ENCODE measurements at regions of chr3 and their contacts with region 1.

Region 1: GRCh38 chr3:101573449-101574387 is at the start of gene PCNP:
- DNase-seq: peak; percentile 98
- ATAC-seq: peak; percentile 78
- H3K4me3 Mint-ChIP-seq: peak within 1 kb of the TSS; percentile 98
- H3K27ac Mint-ChIP-seq: peak within 1 kb of the TSS; percentile 99
- H3K4me1 Mint-ChIP-seq: peaks cover 43% of the 10 kb centered on the region
- H3K27me3 Mint-ChIP-seq: no peaks in the 10 kb centered on the region
- total RNA-seq, gene PCNP: 167 to 173 TPM

Region 2: DNA sequence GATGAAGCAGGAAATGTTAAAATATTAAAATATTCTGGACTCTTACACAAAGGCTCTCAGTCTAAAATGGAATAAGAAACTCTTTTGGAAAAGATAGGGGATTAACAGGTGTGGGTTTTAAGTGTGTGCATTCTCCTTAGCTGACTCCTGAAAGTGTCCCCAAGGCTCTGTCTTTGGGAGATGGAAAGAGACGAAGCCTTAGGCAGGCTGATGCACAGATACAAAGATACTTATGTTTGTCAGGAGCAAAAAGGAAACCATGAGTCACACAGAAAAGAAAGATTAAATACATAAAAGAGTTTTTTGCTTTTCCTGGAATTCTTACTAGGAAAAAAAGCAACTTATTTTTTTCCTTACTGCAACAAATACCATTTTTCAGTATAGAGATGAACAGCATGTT is 556.7 kb before region 1 on chr3:
- POLR2A ChIA-PET with region 1: no interaction called
- DNase-seq: no peak
- ATAC-seq: no peak
- H3K4me3 Mint-ChIP-seq: no peak overlapping the region
- H3K27ac Mint-ChIP-seq: no peak overlapping the region
- H3K4me1 Mint-ChIP-seq: no peaks in the 10 kb centered on the region
- H3K27me3 Mint-ChIP-seq: peaks cover 7% of the 10 kb centered on the region

Region 3: DNA sequence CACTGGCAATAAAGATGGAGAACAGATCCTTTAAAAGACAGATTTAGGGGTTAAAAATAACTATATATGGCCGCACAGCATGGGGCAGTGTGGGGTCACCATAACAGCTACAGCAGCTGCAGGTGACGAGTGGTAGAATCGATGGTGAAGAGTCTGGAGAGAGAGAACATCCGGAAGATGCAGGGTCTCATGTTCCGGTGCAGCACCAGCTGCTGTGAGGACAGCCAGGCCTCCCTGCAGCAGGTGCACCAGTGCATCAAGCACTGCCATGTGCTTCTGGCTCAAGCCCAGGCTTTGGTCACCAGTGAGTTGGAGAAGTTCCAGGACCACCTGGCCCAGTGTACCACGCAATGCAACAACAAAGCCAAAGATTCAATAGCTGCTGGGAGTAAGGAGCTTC is 159.6 kb before region 1 on chr3:
- POLR2A ChIA-PET with region 1: no interaction called
- DNase-seq: no peak
- ATAC-seq: no peak
- H3K4me3 Mint-ChIP-seq: no peak overlapping the region
- H3K27ac Mint-ChIP-seq: no peak overlapping the region
- H3K4me1 Mint-ChIP-seq: peaks cover 8% of the 10 kb centered on the region
- H3K27me3 Mint-ChIP-seq: no peaks in the 10 kb centered on the region

Region 4: GRCh38 chr3:101512646-101513418 is 60.9 kb before region 1 on chr3 and contains the start of gene SENP7:
- POLR2A ChIA-PET with region 1: interaction called, 17 read pairs
- DNase-seq: peak; percentile 77
- ATAC-seq: peak; percentile 69
- H3K4me3 Mint-ChIP-seq: peak within 1 kb of the TSS; percentile 99
- H3K27ac Mint-ChIP-seq: peak within 1 kb of the TSS; percentile 98
- H3K4me1 Mint-ChIP-seq: peaks cover 26% of the 10 kb centered on the region
- H3K27me3 Mint-ChIP-seq: no peaks in the 10 kb centered on the region
- total RNA-seq, gene SENP7: 42.5 to 47.6 TPM

Region 5: DNA sequence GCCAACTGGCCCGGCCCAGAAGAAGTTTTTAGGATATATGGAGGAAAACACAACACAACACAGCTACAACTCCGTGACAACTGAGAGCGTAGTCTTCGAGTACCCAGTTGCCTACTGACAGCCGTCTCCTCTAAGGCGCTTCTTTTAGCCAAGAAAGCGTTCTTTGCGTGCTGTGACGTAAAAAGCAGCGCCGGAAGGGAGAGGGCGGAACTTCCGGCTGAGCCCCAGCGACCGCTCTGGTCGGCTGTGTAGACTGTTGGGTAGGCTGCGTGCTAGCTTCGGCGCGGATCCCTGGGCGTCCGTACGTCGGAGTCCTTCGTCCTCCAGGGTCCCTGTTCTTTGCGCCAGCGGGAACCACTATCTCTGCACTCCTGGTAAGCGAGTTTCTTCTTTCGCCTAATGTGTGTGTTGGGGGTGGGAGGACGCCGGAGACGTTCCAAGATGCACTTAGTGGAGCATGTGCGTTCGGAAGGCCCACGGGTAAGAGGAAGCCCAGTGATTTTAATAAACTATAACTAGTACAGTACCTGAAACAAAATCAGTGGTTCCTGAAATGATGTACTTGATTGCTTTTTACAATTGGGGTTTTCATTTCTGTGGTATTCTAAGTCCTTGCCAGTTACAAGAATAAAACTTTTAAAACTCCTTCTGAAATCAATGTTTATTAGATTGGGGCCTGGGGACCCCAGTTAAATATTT is 11.9 kb before region 1 on chr3 and contains the start of gene TRMT10C:
- POLR2A ChIA-PET with region 1: interaction called, 39 read pairs
- DNase-seq: peak; percentile 89
- ATAC-seq: peak; percentile 97
- H3K4me3 Mint-ChIP-seq: peak within 1 kb of the TSS; percentile 96
- H3K27ac Mint-ChIP-seq: peak within 1 kb of the TSS; percentile 97
- H3K4me1 Mint-ChIP-seq: peaks cover 26% of the 10 kb centered on the region
- H3K27me3 Mint-ChIP-seq: peaks cover 2% of the 10 kb centered on the region
- total RNA-seq, gene TRMT10C: 22.8 to 23.9 TPM

Region 6: GRCh38 chr3:101591071-101591470 is 17.4 kb after region 1 on chr3:
- POLR2A ChIA-PET with region 1: no interaction called
- DNase-seq: no peak
- ATAC-seq: no peak
- H3K4me3 Mint-ChIP-seq: no peak overlapping the region
- H3K27ac Mint-ChIP-seq: no peak overlapping the region
- H3K4me1 Mint-ChIP-seq: peaks cover 2% of the 10 kb centered on the region
- H3K27me3 Mint-ChIP-seq: no peaks in the 10 kb centered on the region

Region 7: DNA sequence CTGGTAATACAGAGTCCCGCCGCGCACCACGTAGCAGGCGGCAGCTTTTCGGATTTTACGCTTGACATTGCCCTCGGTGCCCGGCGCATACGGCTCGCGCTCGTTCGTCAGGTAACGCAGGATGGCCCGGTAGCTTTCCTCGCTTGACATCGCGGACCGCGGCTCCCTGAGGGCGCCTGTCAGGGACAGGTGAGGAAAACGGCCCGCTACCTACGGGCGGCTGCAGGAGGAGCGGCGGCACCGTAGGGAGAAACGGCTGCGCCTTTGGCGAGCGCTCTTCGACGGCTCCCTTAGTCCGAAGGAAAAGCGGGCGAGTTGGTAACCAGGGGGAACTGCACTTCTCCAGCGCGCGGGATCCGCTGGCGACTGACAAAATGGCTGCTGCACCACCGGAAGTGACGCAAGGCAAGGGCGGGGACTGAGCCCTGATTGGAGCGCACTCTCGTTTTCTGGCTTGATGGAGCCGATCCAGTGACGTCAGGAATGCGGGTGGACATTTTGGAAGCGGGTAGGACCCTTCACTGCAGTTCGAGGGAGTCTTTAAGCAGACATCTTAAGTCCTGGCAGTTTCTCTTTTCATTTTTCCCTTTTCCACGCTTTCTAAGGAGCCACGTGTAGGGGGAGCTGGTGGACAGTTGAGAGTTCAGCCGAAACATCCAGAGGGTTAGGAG is 103.2 kb after region 1 on chr3 and contains the start of gene ZBTB11:
- POLR2A ChIA-PET with region 1: interaction called, 28 read pairs
- DNase-seq: peak; percentile 99
- ATAC-seq: peak; percentile 74
- H3K4me3 Mint-ChIP-seq: peak within 1 kb of the TSS; percentile 84
- H3K27ac Mint-ChIP-seq: peak within 1 kb of the TSS; percentile 96
- H3K4me1 Mint-ChIP-seq: peaks cover 32% of the 10 kb centered on the region
- H3K27me3 Mint-ChIP-seq: no peaks in the 10 kb centered on the region
- total RNA-seq, gene ZBTB11: 35.0 to 35.3 TPM

Region 8: DNA sequence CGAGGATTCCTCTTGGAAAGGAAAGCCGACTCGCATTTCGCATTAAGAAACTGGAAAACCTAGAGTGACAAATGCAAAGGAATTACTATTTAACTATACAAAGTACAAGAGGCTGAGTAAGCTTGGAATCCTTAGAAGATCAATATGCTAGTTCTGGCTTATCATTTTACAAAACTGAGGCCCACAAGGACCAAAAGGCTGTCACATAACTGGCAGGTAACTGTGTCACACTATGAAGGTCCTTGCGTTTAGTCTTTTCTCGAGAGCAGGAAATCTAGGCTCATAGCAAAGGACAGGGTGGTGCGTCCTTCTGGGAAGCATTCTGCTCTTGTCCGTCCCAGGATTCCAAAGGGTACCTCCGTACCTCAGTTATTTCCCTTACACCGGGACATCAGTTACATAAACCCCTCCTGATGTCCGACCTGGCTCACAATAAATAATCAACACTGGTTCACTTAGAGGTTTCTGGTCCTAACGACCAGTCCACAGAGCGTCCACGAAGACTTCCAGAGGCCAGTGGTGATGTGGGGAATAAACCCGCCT is 112.2 kb after region 1 on chr3:
- POLR2A ChIA-PET with region 1: interaction called, 12 read pairs
- DNase-seq: no peak
- ATAC-seq: peak; percentile 2
- H3K4me3 Mint-ChIP-seq: peak overlapping the region; percentile 100
- H3K27ac Mint-ChIP-seq: peak overlapping the region; percentile 99
- H3K4me1 Mint-ChIP-seq: peaks cover 26% of the 10 kb centered on the region
- H3K27me3 Mint-ChIP-seq: no peaks in the 10 kb centered on the region

Measured in activated naive CD8-positive, alpha-beta T cell treated with anti-CD3 and anti-CD28 coated beads, Interleukin-2, amount 10 ng/mL, durations not matched to agents 7 days and 5 days (primary cell).